B cell (primary cell): ENCODE measurements at regions of chr15 and their contacts with region 1.

Region 1: GRCh38 chr15:44215594-44215993 is 20.5 kb upstream of the FRMD5 start:
- DNase-seq: no peak
- ATAC-seq: no peak
- H3K4me3 ChIP-seq: no peak overlapping the region
- H3K4me3 Mint-ChIP-seq: no peak overlapping the region
- H3K27ac ChIP-seq: no peak overlapping the region
- H3K27ac Mint-ChIP-seq: no peak overlapping the region
- H3K4me1 ChIP-seq: peaks cover 0 to 2% of the 10 kb centered on the region in 2 donors
- H3K4me1 Mint-ChIP-seq: peaks cover 2% of the 10 kb centered on the region
- H3K27me3 ChIP-seq: peaks cover 0 to 6% (median 0%) of the 10 kb centered on the region in 4 experiments
- H3K27me3 Mint-ChIP-seq: peaks cover 30% of the 10 kb centered on the region
- CTCF ChIP-seq: no peak

Region 2: GRCh38 chr15:43225201-43225949 is 990.2 kb before region 1 on chr15:
- CTCF ChIA-PET with region 1: no interaction called
- POLR2A ChIA-PET with region 1: no interaction called
- intact Hi-C with region 1: no loop called
- DNase-seq: peak; percentile 82
- ATAC-seq: peak; percentile 76
- H3K4me3 ChIP-seq: no peak overlapping the region
- H3K4me3 Mint-ChIP-seq: no peak overlapping the region
- H3K27ac ChIP-seq: no peak overlapping the region
- H3K27ac Mint-ChIP-seq: no peak overlapping the region
- H3K4me1 ChIP-seq: peaks cover 0 to 7% of the 10 kb centered on the region in 2 donors
- H3K4me1 Mint-ChIP-seq: peaks cover 7% of the 10 kb centered on the region
- H3K27me3 ChIP-seq: no peaks in the 10 kb centered on the region
- H3K27me3 Mint-ChIP-seq: peaks cover 10% of the 10 kb centered on the region
- CTCF ChIP-seq: peak; percentile 80

Region 3: DNA sequence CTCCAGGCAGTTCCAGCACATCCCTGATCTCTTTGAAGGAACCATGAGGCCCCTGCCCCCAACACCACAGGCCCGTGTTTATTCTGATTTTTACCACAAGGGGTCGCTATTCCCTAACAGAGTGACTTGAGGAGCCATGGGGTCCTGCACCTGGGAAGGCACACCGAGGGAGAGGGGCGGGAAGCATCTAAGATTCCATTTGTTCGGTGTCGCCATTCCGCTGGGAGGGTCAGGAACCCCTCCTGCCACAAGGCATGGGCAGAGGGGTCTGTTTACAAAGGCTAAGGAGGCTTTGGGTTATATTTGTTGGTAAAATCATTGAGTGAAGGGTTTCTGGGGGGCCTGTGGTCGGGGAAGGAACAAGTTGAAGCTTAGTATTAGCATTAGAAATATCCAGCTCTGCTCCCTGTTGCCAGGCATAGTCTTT is 311.7 kb before region 1 on chr15:
- CTCF ChIA-PET with region 1: interaction called, 3 read pairs
- POLR2A ChIA-PET with region 1: no interaction called
- intact Hi-C with region 1: loop called (anchors 10 kb)
- DNase-seq: peak; percentile 71
- ATAC-seq: peak; percentile 63
- H3K4me3 ChIP-seq: no peak overlapping the region
- H3K4me3 Mint-ChIP-seq: no peak overlapping the region
- H3K27ac ChIP-seq: no peak overlapping the region
- H3K27ac Mint-ChIP-seq: no peak overlapping the region
- H3K4me1 ChIP-seq: peaks cover 0 to 4% of the 10 kb centered on the region in 2 donors
- H3K4me1 Mint-ChIP-seq: peaks cover 5% of the 10 kb centered on the region
- H3K27me3 ChIP-seq: no peaks in the 10 kb centered on the region
- H3K27me3 Mint-ChIP-seq: no peaks in the 10 kb centered on the region
- CTCF ChIP-seq: peak; percentile 78

Region 4: GRCh38 chr15:44181410-44181809 is 34.2 kb before region 1 on chr15:
- CTCF ChIA-PET with region 1: no interaction called
- POLR2A ChIA-PET with region 1: no interaction called
- intact Hi-C with region 1: no loop called
- DNase-seq: no peak
- ATAC-seq: no peak
- H3K4me3 ChIP-seq: no peak overlapping the region
- H3K4me3 Mint-ChIP-seq: no peak overlapping the region
- H3K27ac ChIP-seq: no peak overlapping the region
- H3K27ac Mint-ChIP-seq: no peak overlapping the region
- H3K4me1 ChIP-seq: no peaks in the 10 kb centered on the region
- H3K4me1 Mint-ChIP-seq: no peaks in the 10 kb centered on the region
- H3K27me3 ChIP-seq: no peaks in the 10 kb centered on the region
- H3K27me3 Mint-ChIP-seq: peaks cover 11% of the 10 kb centered on the region
- CTCF ChIP-seq: no peak

Region 5: GRCh38 chr15:44308415-44308814 is 92.8 kb after region 1 on chr15:
- CTCF ChIA-PET with region 1: no interaction called
- POLR2A ChIA-PET with region 1: no interaction called
- intact Hi-C with region 1: loop called (anchors 5 kb)
- DNase-seq: peak; percentile 44
- ATAC-seq: peak; percentile 80
- H3K4me3 ChIP-seq: peak overlapping the region in 1 of 5 experiments; percentile 39
- H3K4me3 Mint-ChIP-seq: peak overlapping the region; percentile 68
- H3K27ac ChIP-seq: peak overlapping the region; percentile 54 to 79
- H3K27ac Mint-ChIP-seq: peak overlapping the region; percentile 71
- H3K4me1 ChIP-seq: peaks cover 39 to 44% of the 10 kb centered on the region in 2 donors
- H3K4me1 Mint-ChIP-seq: peaks cover 51% of the 10 kb centered on the region
- H3K27me3 ChIP-seq: no peaks in the 10 kb centered on the region
- H3K27me3 Mint-ChIP-seq: no peaks in the 10 kb centered on the region
- CTCF ChIP-seq: no peak

Region 6: GRCh38 chr15:44319385-44319784 is 103.8 kb after region 1 on chr15:
- CTCF ChIA-PET with region 1: interaction called, 23 read pairs
- POLR2A ChIA-PET with region 1: no interaction called
- intact Hi-C with region 1: loop called (anchors 1 kb)
- DNase-seq: peak; percentile 64
- ATAC-seq: peak; percentile 69
- H3K4me3 ChIP-seq: no peak overlapping the region
- H3K4me3 Mint-ChIP-seq: no peak overlapping the region
- H3K27ac ChIP-seq: no peak overlapping the region
- H3K27ac Mint-ChIP-seq: peak overlapping the region; percentile 23
- H3K4me1 ChIP-seq: peaks cover 0 to 5% of the 10 kb centered on the region in 2 donors
- H3K4me1 Mint-ChIP-seq: peaks cover 22% of the 10 kb centered on the region
- H3K27me3 ChIP-seq: no peaks in the 10 kb centered on the region
- H3K27me3 Mint-ChIP-seq: no peaks in the 10 kb centered on the region
- CTCF ChIP-seq: peak; percentile 74

Region 7: GRCh38 chr15:44501768-44502366 is 286.3 kb after region 1 on chr15:
- CTCF ChIA-PET with region 1: interaction called, 5 read pairs
- POLR2A ChIA-PET with region 1: no interaction called
- intact Hi-C with region 1: loop called (anchors 1 kb)
- DNase-seq: peak; percentile 43
- ATAC-seq: peak; percentile 28
- H3K4me3 ChIP-seq: no peak overlapping the region
- H3K4me3 Mint-ChIP-seq: no peak overlapping the region
- H3K27ac ChIP-seq: no peak overlapping the region
- H3K27ac Mint-ChIP-seq: no peak overlapping the region
- H3K4me1 ChIP-seq: no peaks in the 10 kb centered on the region
- H3K4me1 Mint-ChIP-seq: peaks cover 2% of the 10 kb centered on the region
- H3K27me3 ChIP-seq: no peaks in the 10 kb centered on the region
- H3K27me3 Mint-ChIP-seq: no peaks in the 10 kb centered on the region
- CTCF ChIP-seq: peak; percentile 74

Region 8: DNA sequence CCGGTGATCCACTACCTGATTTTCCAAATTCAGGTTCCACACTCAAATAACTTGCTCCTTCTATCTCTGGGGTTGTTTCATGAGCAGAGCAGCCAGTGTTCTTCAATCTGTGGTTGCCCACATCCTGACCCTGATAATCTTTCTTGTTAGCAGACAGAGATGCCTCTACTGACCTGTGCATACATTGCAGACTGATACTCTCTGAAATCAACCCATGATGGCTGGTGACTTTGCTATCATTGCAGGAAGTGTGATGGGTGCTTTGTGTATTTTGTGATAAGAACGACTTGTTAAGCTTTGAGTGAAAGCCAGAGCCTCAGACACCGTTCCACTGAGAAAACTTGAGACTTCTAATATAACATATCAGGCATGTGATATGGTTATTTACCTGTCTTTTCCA is 1122.8 kb after region 1 on chr15:
- CTCF ChIA-PET with region 1: no interaction called
- POLR2A ChIA-PET with region 1: no interaction called
- intact Hi-C with region 1: no loop called
- DNase-seq: no peak
- ATAC-seq: no peak
- H3K4me3 ChIP-seq: no peak overlapping the region
- H3K4me3 Mint-ChIP-seq: no peak overlapping the region
- H3K27ac ChIP-seq: no peak overlapping the region
- H3K27ac Mint-ChIP-seq: no peak overlapping the region
- H3K4me1 ChIP-seq: no peaks in the 10 kb centered on the region
- H3K4me1 Mint-ChIP-seq: no peaks in the 10 kb centered on the region
- H3K27me3 ChIP-seq: no peaks in the 10 kb centered on the region
- H3K27me3 Mint-ChIP-seq: peaks cover 8% of the 10 kb centered on the region
- CTCF ChIP-seq: no peak